CD8-positive, alpha-beta T cell (primary cell): ENCODE measurements at regions of chr10 and their contacts with region 1.

Region 1: DNA sequence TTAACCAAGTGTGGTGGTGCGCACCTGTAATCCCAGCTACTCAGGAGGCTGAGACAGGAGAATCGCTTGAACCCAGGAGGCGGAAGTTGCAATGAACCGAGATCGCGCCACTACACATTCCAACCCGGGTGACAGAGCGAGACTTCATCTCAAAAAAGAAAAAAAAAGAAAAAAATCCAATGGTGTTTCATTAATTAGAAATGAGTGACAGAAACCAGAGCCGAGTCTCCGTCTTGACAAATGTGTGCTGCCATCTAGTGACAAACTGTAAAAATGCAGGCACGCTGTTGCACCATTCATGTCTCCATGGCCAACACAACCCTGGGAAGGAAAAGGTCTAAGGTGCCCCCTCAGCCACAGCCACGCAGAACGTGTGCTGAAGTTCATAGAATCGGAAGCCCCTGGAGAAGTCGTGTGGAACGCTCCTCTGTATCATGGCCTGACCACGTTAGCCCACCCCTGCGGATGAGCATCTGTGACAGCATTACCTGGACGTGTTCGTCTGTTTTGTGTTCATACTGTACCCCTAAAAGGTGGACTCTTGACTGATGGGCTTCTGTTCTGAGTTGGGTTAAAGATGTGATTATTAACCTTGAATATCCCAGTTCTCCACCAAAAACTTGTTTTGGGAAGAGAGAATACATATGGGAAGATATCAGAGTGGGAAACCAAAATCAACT is 94.9 kb downstream of the LYZL2 start:
- DNase-seq: peak; percentile 41 to 88 (median 72)
- ATAC-seq: peak; percentile 43
- H3K4me3 ChIP-seq: no peak overlapping the region
- H3K4me3 Mint-ChIP-seq: no peak overlapping the region
- H3K27ac ChIP-seq: no peak overlapping the region
- H3K27ac Mint-ChIP-seq: no peak overlapping the region
- H3K4me1 ChIP-seq: peaks cover 7% of the 10 kb centered on the region
- H3K4me1 Mint-ChIP-seq: peaks cover 29% of the 10 kb centered on the region
- H3K27me3 ChIP-seq: no peaks in the 10 kb centered on the region
- H3K27me3 Mint-ChIP-seq: no peaks in the 10 kb centered on the region
- CTCF ChIP-seq: peak; percentile 92

Region 2: DNA sequence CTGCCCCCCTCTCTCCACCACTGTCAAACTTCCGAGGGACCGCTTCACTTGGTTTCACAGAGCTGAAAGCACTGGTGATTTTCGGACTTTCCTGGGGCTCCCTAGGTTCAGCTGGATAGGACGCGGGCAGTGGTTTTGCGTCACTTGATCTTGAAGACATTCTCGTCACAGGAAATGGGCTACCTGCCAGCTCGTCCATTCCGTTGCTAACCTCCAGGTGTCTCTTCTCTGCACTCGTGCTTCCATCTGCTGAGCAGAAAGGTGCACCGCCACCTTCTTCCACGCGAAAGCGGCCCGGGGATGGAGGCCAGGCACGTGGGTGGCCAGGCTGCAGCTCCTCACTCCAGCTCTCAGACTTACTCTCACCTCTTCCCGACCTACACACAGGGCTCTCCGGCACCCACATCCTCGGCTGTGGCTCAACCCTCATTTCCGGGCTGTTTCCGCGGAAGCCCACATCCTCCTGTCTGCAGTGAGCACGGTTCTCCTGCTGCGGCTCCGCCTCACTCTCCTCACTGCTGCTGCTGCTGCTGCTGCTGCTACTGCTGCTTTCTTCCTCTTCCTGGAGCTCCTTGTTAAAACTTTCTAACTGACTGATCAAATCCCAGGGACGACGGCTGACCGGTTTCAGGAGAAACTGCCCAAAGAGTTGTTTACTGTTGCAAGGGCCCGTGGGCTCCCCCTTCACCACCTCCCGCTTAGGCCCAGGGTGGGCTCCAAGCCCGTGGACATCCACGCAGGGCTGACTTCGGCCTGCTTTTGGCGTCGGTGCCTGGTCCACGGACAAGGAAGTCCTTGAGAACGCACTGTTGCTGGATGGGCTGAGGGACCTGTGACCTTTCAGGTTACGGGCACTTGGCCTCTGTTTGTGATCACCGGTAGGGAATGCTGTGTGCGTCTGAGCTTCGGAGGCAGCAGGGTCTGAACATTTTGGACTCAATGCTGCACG is 507.3 kb before region 1 on chr10:
- CTCF ChIA-PET with region 1: no interaction called
- POLR2A ChIA-PET with region 1: no interaction called
- intact Hi-C with region 1: loop called (anchors 5 to 10 kb)
- DNase-seq: peak; percentile 79 to 96 (median 85)
- ATAC-seq: peak; percentile 88
- H3K4me3 ChIP-seq: peak overlapping the region; percentile 33 to 53
- H3K4me3 Mint-ChIP-seq: peak overlapping the region; percentile 62
- H3K27ac ChIP-seq: peak overlapping the region in 1 of 2 experiments; percentile 41
- H3K27ac Mint-ChIP-seq: peak overlapping the region; percentile 80
- H3K4me1 ChIP-seq: peaks cover 37% of the 10 kb centered on the region
- H3K4me1 Mint-ChIP-seq: peaks cover 35% of the 10 kb centered on the region
- H3K27me3 ChIP-seq: peaks cover 24 to 34% of the 10 kb centered on the region in 2 experiments
- H3K27me3 Mint-ChIP-seq: peaks cover 55% of the 10 kb centered on the region
- CTCF ChIP-seq: peak; percentile 32

Region 3: DNA sequence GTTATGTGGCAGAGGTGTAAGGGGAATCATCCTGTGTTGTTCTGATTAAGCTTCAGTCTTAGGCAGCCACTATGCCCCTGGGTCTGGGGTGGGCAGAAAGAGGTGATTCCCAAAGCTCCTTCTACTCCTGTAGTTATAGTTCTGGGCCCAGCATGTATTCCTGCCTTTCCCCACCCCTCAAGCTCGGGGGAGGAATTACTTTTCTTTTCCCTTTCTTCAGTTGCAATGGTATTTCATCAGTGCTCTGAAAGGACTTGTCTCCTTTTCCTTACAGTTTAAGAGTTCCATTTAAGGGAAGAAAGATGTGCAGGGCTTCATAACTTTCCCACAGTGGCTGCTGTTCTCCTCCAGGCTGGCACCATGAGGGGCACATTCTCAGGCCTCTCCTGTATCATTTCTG is 279.7 kb before region 1 on chr10:
- CTCF ChIA-PET with region 1: no interaction called
- POLR2A ChIA-PET with region 1: no interaction called
- intact Hi-C with region 1: no loop called
- DNase-seq: no peak
- ATAC-seq: no peak
- H3K4me3 ChIP-seq: no peak overlapping the region
- H3K4me3 Mint-ChIP-seq: no peak overlapping the region
- H3K27ac ChIP-seq: no peak overlapping the region
- H3K27ac Mint-ChIP-seq: no peak overlapping the region
- H3K4me1 ChIP-seq: no peaks in the 10 kb centered on the region
- H3K4me1 Mint-ChIP-seq: no peaks in the 10 kb centered on the region
- H3K27me3 ChIP-seq: no peaks in the 10 kb centered on the region
- H3K27me3 Mint-ChIP-seq: peaks cover 16% of the 10 kb centered on the region
- CTCF ChIP-seq: no peak

Region 4: DNA sequence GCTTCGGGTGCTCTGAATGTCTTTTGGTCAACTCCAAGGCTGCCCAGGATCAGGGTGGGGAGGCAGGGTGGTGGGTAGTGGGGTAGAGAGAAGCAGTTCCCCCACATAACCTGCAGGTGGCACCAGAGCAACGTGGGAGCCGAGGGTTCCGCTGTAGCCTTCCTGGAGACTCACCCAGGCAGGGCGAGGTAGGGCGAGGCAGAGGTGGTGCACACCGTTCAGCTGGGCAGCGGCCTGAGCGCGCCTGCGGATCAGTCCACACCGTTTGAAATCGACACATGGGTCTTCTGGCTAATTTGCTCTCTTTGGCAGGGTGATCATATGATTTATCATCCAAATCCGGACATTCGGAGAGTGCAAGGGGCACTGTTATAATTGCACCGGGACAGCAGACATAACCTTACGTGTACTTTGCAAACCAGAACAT is 142.0 kb before region 1 on chr10:
- CTCF ChIA-PET with region 1: interaction called, 30 read pairs
- POLR2A ChIA-PET with region 1: no interaction called
- intact Hi-C with region 1: loop called (anchors 1 kb)
- DNase-seq: peak; percentile 53 to 85 (median 76)
- ATAC-seq: peak; percentile 100
- H3K4me3 ChIP-seq: no peak overlapping the region
- H3K4me3 Mint-ChIP-seq: no peak overlapping the region
- H3K27ac ChIP-seq: no peak overlapping the region
- H3K27ac Mint-ChIP-seq: no peak overlapping the region
- H3K4me1 ChIP-seq: peaks cover 7% of the 10 kb centered on the region
- H3K4me1 Mint-ChIP-seq: peaks cover 3% of the 10 kb centered on the region
- H3K27me3 ChIP-seq: peaks cover 0 to 3% of the 10 kb centered on the region in 2 experiments
- H3K27me3 Mint-ChIP-seq: peaks cover 12% of the 10 kb centered on the region
- CTCF ChIP-seq: peak; percentile 88

Region 5: GRCh38 chr10:30413996-30414576 is 120.5 kb before region 1 on chr10:
- CTCF ChIA-PET with region 1: interaction called, 91 read pairs
- POLR2A ChIA-PET with region 1: interaction called, 9 read pairs
- intact Hi-C with region 1: loop called (anchors 1 kb)
- DNase-seq: peak in 2 of 9 experiments; percentile 66 to 78
- ATAC-seq: peak; percentile 73
- H3K4me3 ChIP-seq: no peak overlapping the region
- H3K4me3 Mint-ChIP-seq: no peak overlapping the region
- H3K27ac ChIP-seq: no peak overlapping the region
- H3K27ac Mint-ChIP-seq: no peak overlapping the region
- H3K4me1 ChIP-seq: peaks cover 10% of the 10 kb centered on the region
- H3K4me1 Mint-ChIP-seq: peaks cover 9% of the 10 kb centered on the region
- H3K27me3 ChIP-seq: no peaks in the 10 kb centered on the region
- H3K27me3 Mint-ChIP-seq: no peaks in the 10 kb centered on the region
- CTCF ChIP-seq: peak; percentile 66

Region 6: GRCh38 chr10:30433730-30434272 is 100.8 kb before region 1 on chr10 and contains the start of gene MAP3K8:
- CTCF ChIA-PET with region 1: interaction called, 8 read pairs
- POLR2A ChIA-PET with region 1: interaction called, 27 read pairs
- intact Hi-C with region 1: loop called (anchors 5 kb)
- DNase-seq: peak; percentile 62 to 95 (median 81)
- ATAC-seq: peak; percentile 76
- H3K4me3 ChIP-seq: peak within 1 kb of the TSS; percentile 84 to 92
- H3K4me3 Mint-ChIP-seq: peak within 1 kb of the TSS; percentile 91
- H3K27ac ChIP-seq: peak within 1 kb of the TSS; percentile 50 to 90
- H3K27ac Mint-ChIP-seq: peak within 1 kb of the TSS; percentile 87
- H3K4me1 ChIP-seq: peaks cover 25% of the 10 kb centered on the region
- H3K4me1 Mint-ChIP-seq: peaks cover 44% of the 10 kb centered on the region
- H3K27me3 ChIP-seq: peaks cover 0 to 3% of the 10 kb centered on the region in 2 experiments
- H3K27me3 Mint-ChIP-seq: no peaks in the 10 kb centered on the region
- CTCF ChIP-seq: no peak
- total RNA-seq, gene MAP3K8: 42.4 to 48.6 TPM

Region 7: DNA sequence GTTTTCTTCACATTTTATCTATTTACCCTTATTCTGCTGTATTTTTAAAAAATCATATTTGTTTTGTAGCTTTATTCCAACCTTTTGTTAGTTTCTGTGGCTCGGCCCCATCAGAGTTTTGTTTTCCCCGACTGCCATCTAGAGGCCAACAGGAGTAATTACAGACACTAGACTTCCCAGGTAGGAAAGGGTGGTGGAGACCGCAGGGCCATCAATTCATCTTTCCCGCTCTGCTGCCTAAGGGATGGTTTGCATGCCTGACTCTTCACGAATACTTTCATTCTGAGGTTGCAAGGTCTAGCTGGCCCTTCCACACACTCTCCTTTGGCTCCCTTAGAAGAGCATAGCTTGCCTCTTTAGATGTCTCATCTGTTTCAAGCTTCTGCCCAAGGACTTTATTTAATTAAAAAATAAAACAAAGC is 56.7 kb after region 1 on chr10:
- CTCF ChIA-PET with region 1: interaction called, 17 read pairs
- POLR2A ChIA-PET with region 1: no interaction called
- intact Hi-C with region 1: loop called (anchors 2 kb)
- DNase-seq: peak in 6 of 9 experiments; percentile 23 to 78 (median 57)
- ATAC-seq: peak; percentile 85
- H3K4me3 ChIP-seq: no peak overlapping the region
- H3K4me3 Mint-ChIP-seq: no peak overlapping the region
- H3K27ac ChIP-seq: no peak overlapping the region
- H3K27ac Mint-ChIP-seq: no peak overlapping the region
- H3K4me1 ChIP-seq: no peaks in the 10 kb centered on the region
- H3K4me1 Mint-ChIP-seq: no peaks in the 10 kb centered on the region
- H3K27me3 ChIP-seq: no peaks in the 10 kb centered on the region
- H3K27me3 Mint-ChIP-seq: peaks cover 16% of the 10 kb centered on the region
- CTCF ChIP-seq: peak; percentile 84